Panc1 (cell line): ENCODE measurements at regions of chr5 and their contacts with region 1.

Region 1: DNA sequence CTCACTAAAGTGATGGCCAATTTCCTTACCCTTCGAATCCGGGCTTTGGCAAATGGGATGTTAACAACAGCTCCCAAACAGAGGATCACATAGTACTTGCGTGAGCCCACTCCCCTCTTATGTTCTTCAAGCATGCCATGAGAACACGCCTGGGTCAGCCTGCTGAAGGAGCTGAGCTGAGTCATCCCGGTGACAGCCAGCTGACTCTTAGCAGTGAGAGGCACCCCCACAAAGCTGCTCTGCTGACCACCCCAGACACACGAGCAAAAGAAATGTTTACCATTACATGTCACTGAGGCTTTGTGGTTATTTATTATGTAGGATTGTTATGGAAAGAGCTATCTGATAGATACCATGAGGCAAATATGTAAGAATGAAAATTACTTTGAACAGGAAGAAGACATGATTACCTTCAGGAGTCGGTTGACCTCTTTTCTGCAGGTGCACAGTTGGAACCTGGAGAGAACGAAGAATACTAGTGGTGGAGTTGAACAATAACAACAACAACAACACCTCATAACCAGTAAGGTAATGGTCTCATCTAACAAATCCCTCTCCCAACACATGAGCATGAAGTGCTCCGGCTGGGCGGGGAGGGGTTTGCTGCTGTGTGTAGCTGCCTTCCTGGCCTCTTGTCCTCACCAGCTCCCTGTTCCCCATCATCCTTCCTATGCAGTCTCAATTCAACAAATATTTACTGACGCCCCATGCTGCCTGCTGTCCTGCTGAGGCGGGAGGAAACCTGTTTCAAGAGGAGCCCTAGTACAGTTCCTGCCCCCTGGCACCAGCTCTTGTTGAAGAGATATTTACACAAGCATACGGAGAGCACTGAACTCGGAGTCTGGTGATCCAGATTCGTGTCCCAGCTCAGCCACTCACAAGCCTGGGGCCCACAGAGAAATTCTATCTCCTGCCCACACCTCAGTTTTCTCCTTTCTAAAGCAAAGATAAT is 69.4 kb upstream of the LHFPL2 start:
- DNase-seq: no peak
- ATAC-seq: no peak
- H3K4me3 ChIP-seq: no peak overlapping the region
- H3K27ac ChIP-seq: no peak overlapping the region
- H3K4me1 ChIP-seq: peaks cover 5% of the 10 kb centered on the region; the same call in 1 of the 2 replicates
- H3K27me3 ChIP-seq: no peaks in the 10 kb centered on the region
- CTCF ChIP-seq: no peak

Region 2: DNA sequence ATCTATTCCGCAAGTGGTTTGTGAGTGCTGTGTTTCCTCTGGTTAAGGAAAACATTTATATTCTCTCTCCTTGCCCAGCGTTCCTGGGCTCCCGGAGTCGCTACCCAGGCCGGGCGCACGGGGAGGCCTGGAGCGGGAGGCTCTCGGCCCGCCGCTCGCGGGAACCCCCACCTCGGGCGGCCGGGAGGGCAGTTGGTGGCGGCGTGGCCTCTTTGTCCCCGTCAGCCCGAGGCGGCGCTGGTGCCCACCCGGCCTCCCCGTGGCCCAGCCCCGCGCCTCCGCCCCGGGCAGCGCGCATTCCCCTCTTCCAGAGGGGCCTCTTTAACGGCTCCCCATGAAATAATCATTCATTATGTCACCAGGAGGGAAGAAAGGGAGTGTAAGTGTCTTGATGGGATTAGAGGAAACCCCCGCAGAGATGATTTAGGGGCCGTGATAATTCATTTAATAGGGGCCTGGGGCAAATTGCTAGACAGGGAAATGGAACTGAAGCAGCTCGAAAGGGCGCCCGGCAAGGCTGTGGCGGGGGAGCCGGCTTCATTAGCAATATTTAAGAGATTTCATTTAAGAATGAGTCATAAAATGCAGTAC is 759.9 kb before region 1 on chr5:
- CTCF ChIA-PET with region 1: no interaction called
- POLR2A ChIA-PET with region 1: no interaction called
- in situ Hi-C with region 1: no loop called
- intact Hi-C with region 1: no loop called
- DNase-seq: no peak
- ATAC-seq: no peak
- H3K4me3 ChIP-seq: no peak overlapping the region
- H3K27ac ChIP-seq: no peak overlapping the region
- H3K4me1 ChIP-seq: no peaks in the 10 kb centered on the region
- H3K27me3 ChIP-seq: no peaks in the 10 kb centered on the region
- CTCF ChIP-seq: no peak

Region 3: DNA sequence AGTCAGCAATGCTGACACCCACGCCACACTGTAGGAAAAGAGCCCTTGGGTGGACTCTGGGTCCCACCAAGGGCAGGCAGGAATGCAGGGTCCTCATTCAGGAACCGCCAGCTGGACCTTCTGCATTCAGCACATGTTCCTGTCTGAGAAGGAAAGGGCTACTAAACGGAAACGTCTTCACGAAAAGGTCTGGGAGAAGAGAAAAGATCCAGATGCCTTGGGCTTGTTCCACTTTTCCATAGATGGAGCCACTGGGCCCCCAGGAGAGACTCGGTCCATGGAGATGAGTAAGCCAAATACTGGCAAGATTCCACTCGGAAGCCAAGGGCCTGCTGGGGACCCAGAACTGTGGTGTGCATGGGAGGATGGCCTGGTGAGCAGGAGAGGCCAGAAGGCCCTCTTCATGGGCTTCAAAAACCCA is 107.8 kb before region 1 on chr5:
- CTCF ChIA-PET with region 1: no interaction called
- POLR2A ChIA-PET with region 1: no interaction called
- in situ Hi-C with region 1: no loop called
- intact Hi-C with region 1: no loop called
- DNase-seq: no peak
- ATAC-seq: no peak
- H3K4me3 ChIP-seq: no peak overlapping the region
- H3K27ac ChIP-seq: no peak overlapping the region
- H3K4me1 ChIP-seq: peaks cover 7% of the 10 kb centered on the region; the same call in 1 of the 2 replicates
- H3K27me3 ChIP-seq: no peaks in the 10 kb centered on the region
- CTCF ChIP-seq: no peak

Region 4: GRCh38 chr5:78706825-78707224 is 11.1 kb before region 1 on chr5:
- CTCF ChIA-PET with region 1: no interaction called
- POLR2A ChIA-PET with region 1: interaction called, 10 read pairs
- in situ Hi-C with region 1: no loop called
- intact Hi-C with region 1: no loop called
- DNase-seq: no peak
- ATAC-seq: no peak
- H3K4me3 ChIP-seq: no peak overlapping the region
- H3K27ac ChIP-seq: no peak overlapping the region
- H3K4me1 ChIP-seq: no peaks in the 10 kb centered on the region
- H3K27me3 ChIP-seq: no peaks in the 10 kb centered on the region
- CTCF ChIP-seq: no peak